ENCODE measurements at regions of chr10 and their contacts with region 1.

Region 1: DNA sequence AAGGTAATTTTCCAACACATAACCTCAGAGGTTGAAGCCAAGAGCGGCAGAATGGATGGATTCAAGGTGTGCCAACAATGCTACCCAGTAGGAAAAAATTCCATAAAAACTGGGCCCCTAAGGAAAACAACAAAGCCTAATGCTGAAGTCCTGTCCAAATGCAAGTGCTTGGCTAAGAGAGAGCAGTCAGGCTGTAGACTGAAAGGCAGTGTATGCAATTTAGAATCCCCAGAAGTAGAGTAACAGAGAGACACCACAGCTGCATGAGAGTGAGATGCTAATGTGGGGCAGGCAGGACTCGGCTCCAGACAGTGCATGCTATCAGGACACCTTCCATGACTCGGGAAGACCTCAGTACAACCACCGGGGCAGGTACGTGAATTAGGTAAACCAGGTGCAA is 124.5 kb downstream of the ZFAND4 start:
- DNase-seq: no peak
- ATAC-seq: no peak
- H3K4me3 ChIP-seq: no peak overlapping the region
- H3K27ac ChIP-seq: no peak overlapping the region
- H3K4me1 ChIP-seq: no peaks in the 10 kb centered on the region
- H3K27me3 ChIP-seq: no peaks in the 10 kb centered on the region
- CTCF ChIP-seq: no peak
- POLR2A ChIP-seq: no peak
- RAD21 ChIP-seq: no peak

Region 2: DNA sequence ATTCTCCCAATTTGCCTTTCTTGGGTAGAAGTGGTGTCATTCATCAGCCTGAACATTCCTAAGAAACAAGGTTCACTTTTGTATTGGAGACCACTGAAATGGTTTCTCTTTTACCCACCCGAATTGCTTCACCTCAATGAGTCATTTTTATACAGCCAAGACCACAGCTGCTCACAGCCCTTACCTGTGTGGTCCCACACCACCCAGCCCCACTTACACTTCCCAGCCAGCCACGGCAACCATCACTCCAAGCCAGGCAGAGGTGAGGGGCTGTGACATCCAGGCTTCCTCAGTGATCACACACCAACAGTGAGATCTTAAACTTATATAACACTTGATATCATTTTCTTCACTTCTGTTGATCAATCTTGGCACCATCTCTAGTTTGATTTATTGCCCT is 253.4 kb before region 1 on chr10:
- CTCF ChIA-PET with region 1: no interaction called
- POLR2A ChIA-PET with region 1: no interaction called
- RAD21 ChIA-PET with region 1: no interaction called
- intact Hi-C with region 1: no loop called
- DNase-seq: no peak
- ATAC-seq: no peak
- H3K4me3 ChIP-seq: no peak overlapping the region
- H3K27ac ChIP-seq: no peak overlapping the region
- H3K4me1 ChIP-seq: no peaks in the 10 kb centered on the region
- H3K27me3 ChIP-seq: peaks cover 21% of the 10 kb centered on the region; the same call in 1 of the 2 replicates
- CTCF ChIP-seq: no peak
- POLR2A ChIP-seq: no peak
- RAD21 ChIP-seq: no peak

Region 3: DNA sequence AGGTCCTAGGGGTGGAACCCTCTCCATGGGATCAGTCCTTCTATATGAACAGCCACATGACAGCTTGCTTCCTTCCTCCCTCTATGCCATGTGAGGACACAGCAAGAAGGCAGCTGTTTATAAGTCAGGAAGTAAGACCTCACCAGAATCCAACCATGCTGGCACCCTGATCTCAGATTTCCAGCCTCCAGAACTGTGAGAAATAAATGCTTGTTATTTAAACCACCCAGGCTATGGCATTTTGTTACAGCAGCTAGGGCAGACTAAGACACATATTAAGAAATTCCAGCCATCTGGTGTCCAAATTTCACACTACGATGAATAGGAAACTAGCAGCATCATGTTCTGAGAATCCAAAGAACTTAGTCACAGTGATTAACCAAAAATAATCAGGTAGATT is 15.6 kb before region 1 on chr10:
- CTCF ChIA-PET with region 1: no interaction called
- POLR2A ChIA-PET with region 1: no interaction called
- RAD21 ChIA-PET with region 1: no interaction called
- intact Hi-C with region 1: loop called (anchors 2 kb)
- DNase-seq: no peak
- ATAC-seq: no peak
- H3K4me3 ChIP-seq: no peak overlapping the region
- H3K27ac ChIP-seq: no peak overlapping the region
- H3K4me1 ChIP-seq: no peaks in the 10 kb centered on the region
- H3K27me3 ChIP-seq: no peaks in the 10 kb centered on the region
- CTCF ChIP-seq: no peak
- POLR2A ChIP-seq: no peak
- RAD21 ChIP-seq: no peak

Measured in HCT116 (cell line).